ENCODE measurements at regions of chr7 and their contacts with region 1.

Region 1: DNA sequence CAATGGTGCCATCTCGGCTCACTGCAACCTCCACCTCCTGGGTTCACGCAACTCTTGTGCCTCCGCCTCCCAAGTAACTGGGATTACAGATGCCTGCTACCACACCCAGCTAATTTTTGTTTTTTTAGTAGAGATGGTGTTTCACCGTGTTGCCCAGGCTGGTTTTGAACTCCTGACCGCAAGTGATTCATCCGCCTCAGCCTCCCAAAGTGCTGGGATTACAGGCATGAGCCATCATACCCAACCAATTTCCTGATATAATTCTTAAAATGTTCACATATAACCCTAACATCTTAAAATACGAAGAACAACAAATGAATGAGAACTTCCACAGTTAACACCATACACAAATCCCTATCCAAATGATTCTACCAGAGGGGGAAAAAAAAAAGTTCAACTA is 31.2 kb downstream of the BAIAP2L1 start:
- H3K4me3 ChIP-seq: no peak overlapping the region
- H3K27ac ChIP-seq: no peak overlapping the region
- H3K4me1 ChIP-seq: no peaks in the 10 kb centered on the region
- CTCF ChIP-seq: no peak

Region 2: DNA sequence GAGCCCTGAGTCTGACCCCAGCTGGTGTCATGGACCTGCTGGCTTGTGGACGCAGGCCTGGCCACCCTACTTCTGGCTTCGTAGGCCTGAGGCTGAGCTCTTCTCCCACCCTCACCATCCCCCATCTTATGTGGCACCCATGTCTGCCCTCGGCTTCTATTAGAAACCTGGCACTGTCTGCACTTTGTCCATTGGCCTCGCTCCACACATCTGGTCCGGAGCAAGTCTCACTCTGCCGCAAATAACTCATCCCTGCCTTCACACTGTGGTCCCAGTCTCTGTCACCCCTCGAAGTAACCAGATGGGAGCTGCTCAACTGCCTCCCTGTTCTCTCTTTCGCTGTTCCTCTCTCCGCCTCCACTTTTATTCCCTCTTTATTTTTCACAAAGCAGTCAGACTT is 587.2 kb after region 1 on chr7:
- CTCF ChIA-PET with region 1: no interaction called
- POLR2A ChIA-PET with region 1: interaction called, 10 read pairs
- H3K4me3 ChIP-seq: no peak overlapping the region
- H3K27ac ChIP-seq: no peak overlapping the region
- H3K4me1 ChIP-seq: no peaks in the 10 kb centered on the region
- CTCF ChIP-seq: no peak